Tibial artery (tissue), 4 donors: ENCODE measurements at regions of chr19 and their contacts with region 1.

Region 1: DNA sequence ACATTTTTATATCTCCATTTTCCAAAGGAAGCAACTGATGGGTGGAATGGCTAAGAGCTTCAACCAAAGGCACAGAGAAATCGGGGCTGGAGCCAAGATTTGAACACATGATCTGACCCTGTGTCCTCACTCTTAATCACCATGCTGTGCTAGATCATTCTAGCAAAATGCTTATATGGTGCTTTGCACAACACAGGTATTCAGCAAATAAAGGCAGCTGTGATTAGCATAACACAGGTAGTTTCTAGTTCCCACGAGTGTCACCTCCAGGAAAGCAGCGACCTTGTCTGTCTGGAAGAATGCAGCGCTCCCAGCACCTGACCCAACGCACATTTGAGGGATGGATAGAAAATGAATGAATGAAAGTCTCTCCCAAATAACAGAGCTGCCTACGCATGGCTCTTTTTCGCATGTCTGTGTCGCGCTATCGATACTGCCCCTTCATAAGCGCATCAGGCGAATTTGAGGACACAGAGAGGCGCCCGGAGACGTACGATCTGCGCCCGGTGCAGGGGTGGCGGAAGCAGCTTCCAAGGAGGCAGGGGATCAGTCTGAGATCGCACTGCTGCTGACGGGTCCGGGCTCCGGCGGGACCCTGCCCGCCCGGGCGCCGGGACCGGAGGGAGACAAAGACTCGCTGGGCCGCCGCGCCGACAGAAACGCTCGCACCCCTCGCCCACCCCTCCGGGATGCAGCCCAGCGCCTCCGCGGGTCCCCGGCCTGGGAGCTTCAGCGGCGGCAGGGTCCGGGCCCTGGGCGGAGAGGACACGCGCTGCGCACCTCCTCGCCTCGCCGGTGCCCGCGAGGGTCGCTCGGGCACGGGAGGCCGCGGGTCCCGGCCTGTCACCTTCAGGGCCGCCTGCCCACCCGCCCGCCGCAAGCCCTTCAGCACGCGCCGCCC is 609 bp downstream of the EPS15L1 start:
- DNase-seq: peak in 1 of 2 donors; percentile 36
- H3K4me3 ChIP-seq: peak overlapping the region; percentile 76 to 86
- H3K27ac ChIP-seq: peak overlapping the region; percentile 69 to 83
- H3K4me1 ChIP-seq: peaks cover 0 to 29% (median 19%) of the 10 kb centered on the region in 4 donors
- H3K27me3 ChIP-seq: no peaks in the 10 kb centered on the region
- CTCF ChIP-seq: no peak

Region 2: DNA sequence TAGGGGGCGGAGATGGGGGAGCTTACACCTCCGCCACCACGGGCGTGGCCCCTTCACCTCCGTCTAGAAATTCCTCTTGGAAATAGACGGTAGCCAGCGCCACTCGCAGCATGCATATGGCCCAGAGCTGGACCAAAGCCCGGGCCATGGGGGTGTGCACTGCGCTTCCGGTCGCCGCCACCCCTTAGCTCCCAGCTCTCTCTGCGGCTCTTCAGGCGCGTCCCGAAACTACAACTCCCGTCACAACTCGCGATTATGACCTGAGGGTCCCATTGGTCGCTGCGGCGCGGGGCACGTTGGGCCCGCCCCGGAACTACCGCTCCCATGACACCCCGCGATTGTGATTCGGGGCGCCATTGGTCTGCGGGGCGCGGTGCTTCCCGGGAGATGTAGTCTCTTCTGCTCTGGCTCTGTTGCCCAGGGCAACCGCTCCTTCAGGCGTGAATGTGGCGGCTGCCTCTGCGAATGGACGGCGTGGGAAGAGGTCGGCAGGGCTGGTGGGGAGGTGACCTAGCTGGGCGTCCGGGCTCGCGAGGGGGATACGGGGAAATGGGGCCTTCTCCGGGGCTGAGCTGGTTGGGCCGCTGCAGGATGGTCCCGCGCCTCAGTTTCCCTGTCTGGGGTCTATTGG is 24.9 kb after region 1 on chr19 and contains the starts of genes C19orf44 and CALR3:
- intact Hi-C with region 1: loop called (anchors 2 kb)
- DNase-seq: peak; percentile 99
- H3K4me3 ChIP-seq: peak within 1 kb of the TSS; percentile 65 to 69
- H3K27ac ChIP-seq: peak within 1 kb of the TSS; percentile 73 to 78
- H3K4me1 ChIP-seq: peaks cover 0 to 9% (median 5%) of the 10 kb centered on the region in 4 donors
- H3K27me3 ChIP-seq: no peaks in the 10 kb centered on the region
- CTCF ChIP-seq: peak; percentile 26 to 39

Region 3: GRCh38 chr19:17292286-17293097 is 821.3 kb after region 1 on chr19:
- intact Hi-C with region 1: no loop called
- DNase-seq: peak; percentile 78 to 85
- H3K4me3 ChIP-seq: peak overlapping the region; percentile 54 to 71
- H3K27ac ChIP-seq: peak overlapping the region; percentile 56 to 78
- H3K4me1 ChIP-seq: peaks cover 0 to 17% (median 8%) of the 10 kb centered on the region in 4 donors
- H3K27me3 ChIP-seq: peaks cover 0 to 9% of the 10 kb centered on the region in 2 donors
- CTCF ChIP-seq: peak; percentile 72 to 74